H1 (cell line): ENCODE measurements at regions of chr5 and their contacts with region 1.

Region 1: DNA sequence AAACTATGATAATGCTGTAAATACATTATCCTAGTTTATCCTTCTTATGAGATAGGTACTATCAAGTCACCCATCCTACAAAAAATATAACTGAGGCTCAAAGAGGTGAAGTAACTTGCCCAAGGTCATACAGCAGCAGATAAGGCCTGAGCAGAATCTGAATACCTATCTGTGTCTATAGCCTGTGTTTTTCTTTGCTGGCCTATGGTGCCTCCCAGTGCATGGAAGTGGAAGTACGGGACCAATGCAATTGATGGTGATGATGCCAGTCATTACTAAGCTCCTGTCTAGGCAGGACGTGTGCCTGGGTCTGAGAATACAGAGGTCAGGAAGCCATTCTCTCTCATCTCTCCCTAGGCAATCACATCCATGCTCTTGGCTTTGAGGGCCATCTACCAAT is 67.8 kb downstream of the FAT2 start:
- DNase-seq: peak; percentile 15 to 69
- H3K4me3 ChIP-seq: no peak overlapping the region
- H3K27ac ChIP-seq: no peak overlapping the region
- H3K4me1 ChIP-seq: no peaks in the 10 kb centered on the region
- H3K27me3 ChIP-seq: no peaks in the 10 kb centered on the region
- CTCF ChIP-seq: peak; percentile 62 to 94 (median 89)
- EP300 ChIP-seq: no peak
- POLR2A ChIP-seq: no peak
- RAD21 ChIP-seq: peak; percentile 95 to 97

Region 2: GRCh38 chr5:151463137-151464029 is 60.0 kb before region 1 on chr5:
- CTCF ChIA-PET with region 1: interaction called, 17 read pairs
- POLR2A ChIA-PET with region 1: no interaction called
- DNase-seq: peak in 1 of 2 experiments; percentile 83
- H3K4me3 ChIP-seq: no peak overlapping the region
- H3K27ac ChIP-seq: no peak overlapping the region
- H3K4me1 ChIP-seq: no peaks in the 10 kb centered on the region
- H3K27me3 ChIP-seq: no peaks in the 10 kb centered on the region
- CTCF ChIP-seq: peak; percentile 81 to 85 (median 82)
- EP300 ChIP-seq: no peak
- POLR2A ChIP-seq: no peak
- RAD21 ChIP-seq: peak; percentile 53 to 76

Region 3: DNA sequence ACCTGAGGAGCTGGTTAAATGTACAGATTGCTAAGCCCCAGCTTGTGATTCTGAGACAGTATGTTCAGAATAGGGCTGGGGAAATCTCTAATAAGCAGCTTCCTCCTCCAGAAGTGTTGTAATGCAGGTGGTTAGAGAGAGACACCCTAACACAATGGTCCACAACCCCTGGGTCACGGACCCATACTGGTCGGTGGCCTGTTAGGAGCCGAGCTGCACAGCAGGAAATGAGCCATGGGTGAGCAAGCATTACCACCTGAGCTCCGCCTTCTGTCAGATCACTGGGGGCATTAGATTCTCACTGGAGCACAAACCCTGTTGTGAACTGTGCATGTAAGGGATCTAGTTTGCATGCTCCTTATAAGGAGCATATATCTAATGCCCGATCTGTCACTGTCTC is 14.1 kb before region 1 on chr5:
- CTCF ChIA-PET with region 1: interaction called, 106 read pairs
- POLR2A ChIA-PET with region 1: interaction called, 3 read pairs
- DNase-seq: no peak
- H3K4me3 ChIP-seq: no peak overlapping the region
- H3K27ac ChIP-seq: no peak overlapping the region
- H3K4me1 ChIP-seq: no peaks in the 10 kb centered on the region; a peak in 1 of 7 replicates
- H3K27me3 ChIP-seq: no peaks in the 10 kb centered on the region
- CTCF ChIP-seq: no peak
- EP300 ChIP-seq: no peak
- POLR2A ChIP-seq: no peak
- RAD21 ChIP-seq: no peak

Region 4: DNA sequence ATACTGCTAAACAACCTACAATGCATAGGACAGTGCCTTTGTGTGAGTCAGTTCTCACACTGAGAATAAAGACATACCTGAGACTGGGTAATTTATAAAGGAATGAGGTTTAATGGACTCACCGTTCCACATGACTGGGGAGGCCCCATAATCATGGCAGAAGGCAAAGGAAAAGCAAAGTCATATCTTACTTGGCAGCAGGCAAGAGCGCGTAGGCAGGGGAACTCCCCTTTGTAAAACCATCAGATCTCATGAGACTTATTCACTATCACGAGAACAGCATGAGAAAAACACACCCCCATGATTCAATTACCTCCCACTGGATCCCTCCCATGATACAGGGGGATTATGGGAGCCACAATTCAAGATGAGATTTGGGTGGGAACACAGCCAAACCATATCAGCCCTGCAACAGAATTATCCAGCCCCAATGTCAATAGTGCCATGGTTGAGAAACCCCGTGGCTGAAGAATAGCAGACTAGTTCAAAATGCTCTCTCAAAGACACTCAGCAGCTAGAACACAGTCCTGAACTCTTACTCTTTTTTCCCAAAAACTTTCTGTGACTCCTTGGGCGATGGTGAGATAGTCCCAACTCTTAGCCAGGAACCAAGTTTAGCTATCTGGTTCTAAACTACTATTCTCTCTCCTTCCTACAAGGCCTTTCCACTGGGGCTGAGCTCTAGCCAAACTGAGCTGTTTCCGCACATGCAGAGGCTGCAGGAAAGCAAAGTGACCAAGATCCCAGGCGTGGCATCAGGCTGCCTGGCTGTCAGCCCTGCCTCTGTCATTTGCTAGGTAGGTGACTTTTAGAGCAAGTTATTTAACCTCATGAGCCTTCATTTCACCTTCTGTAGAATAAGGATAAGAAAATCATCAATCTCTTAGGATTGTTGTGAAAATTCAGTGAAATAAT is 46.1 kb after region 1 on chr5:
- CTCF ChIA-PET with region 1: interaction called, 13 read pairs
- POLR2A ChIA-PET with region 1: no interaction called
- DNase-seq: no peak
- H3K4me3 ChIP-seq: no peak overlapping the region
- H3K27ac ChIP-seq: no peak overlapping the region
- H3K4me1 ChIP-seq: peaks cover 0 to 15% (median 7%) of the 10 kb centered on the region in 4 experiments; a peak in 4 of 7 replicates
- H3K27me3 ChIP-seq: peaks cover 0 to 16% (median 4%) of the 10 kb centered on the region in 4 experiments; a peak in 3 of 7 replicates
- CTCF ChIP-seq: no peak
- EP300 ChIP-seq: no peak
- POLR2A ChIP-seq: no peak
- RAD21 ChIP-seq: no peak

Region 5: GRCh38 chr5:151637676-151638075 is 114.3 kb after region 1 on chr5:
- CTCF ChIA-PET with region 1: interaction called, 16 read pairs
- POLR2A ChIA-PET with region 1: no interaction called
- DNase-seq: no peak
- H3K4me3 ChIP-seq: no peak overlapping the region
- H3K27ac ChIP-seq: no peak overlapping the region
- H3K4me1 ChIP-seq: peaks cover 0 to 5% (median 2%) of the 10 kb centered on the region in 4 experiments; a peak in 2 of 7 replicates
- H3K27me3 ChIP-seq: no peaks in the 10 kb centered on the region; a peak in 2 of 7 replicates
- CTCF ChIP-seq: no peak
- EP300 ChIP-seq: no peak
- POLR2A ChIP-seq: no peak
- RAD21 ChIP-seq: no peak

Region 6: DNA sequence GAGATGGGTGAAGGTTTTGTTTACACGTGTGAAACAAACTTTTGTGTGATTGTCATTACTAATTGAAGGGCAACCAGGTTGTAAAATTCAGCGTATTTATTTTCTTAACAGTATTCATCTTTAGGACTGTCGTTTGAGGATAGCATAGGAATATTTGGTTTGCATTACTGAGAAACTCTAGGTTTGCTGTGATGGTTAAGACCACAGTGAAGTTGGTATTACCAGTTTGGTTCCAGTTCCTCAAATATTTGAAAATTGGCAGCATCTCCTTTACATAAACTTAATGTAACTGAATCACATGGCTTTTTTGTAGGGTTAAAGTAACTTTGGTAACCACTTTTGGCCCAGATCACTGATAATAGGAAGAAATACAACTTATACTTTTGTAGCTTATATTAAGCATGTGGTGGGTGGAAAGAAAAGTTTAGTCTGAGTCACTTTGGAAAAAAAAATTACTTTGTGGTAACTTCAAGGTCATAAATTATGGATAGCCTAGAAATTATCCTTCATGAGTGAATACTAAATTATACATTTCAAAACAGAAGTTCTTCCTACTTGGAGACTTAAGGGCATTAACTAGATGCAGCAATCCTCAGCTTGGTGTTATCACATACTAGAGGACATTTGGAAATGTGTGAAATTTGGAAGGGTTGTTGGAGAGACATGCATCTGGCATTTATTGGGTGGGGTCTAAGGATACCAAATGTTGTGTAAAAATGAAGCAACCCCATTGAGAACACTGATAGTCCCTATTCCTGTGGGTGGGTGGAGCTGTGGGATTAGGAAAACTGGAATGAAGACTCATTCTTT is 282.3 kb after region 1 on chr5:
- CTCF ChIA-PET with region 1: no interaction called
- POLR2A ChIA-PET with region 1: no interaction called
- DNase-seq: no peak
- H3K4me3 ChIP-seq: no peak overlapping the region
- H3K27ac ChIP-seq: no peak overlapping the region
- H3K4me1 ChIP-seq: no peaks in the 10 kb centered on the region
- H3K27me3 ChIP-seq: no peaks in the 10 kb centered on the region
- CTCF ChIP-seq: no peak
- EP300 ChIP-seq: no peak
- POLR2A ChIP-seq: no peak; a peak in 1 of 3 replicates
- RAD21 ChIP-seq: no peak